ENCODE measurements at regions of chr10 and their contacts with region 1.

Region 1: GRCh38 chr10:57338823-57339558 is 928.7 kb downstream of the IPMK start:
- DNase-seq: peak; percentile 43
- H3K4me3 ChIP-seq: no peak overlapping the region
- CTCF ChIP-seq: peak; percentile 59

Region 2: DNA sequence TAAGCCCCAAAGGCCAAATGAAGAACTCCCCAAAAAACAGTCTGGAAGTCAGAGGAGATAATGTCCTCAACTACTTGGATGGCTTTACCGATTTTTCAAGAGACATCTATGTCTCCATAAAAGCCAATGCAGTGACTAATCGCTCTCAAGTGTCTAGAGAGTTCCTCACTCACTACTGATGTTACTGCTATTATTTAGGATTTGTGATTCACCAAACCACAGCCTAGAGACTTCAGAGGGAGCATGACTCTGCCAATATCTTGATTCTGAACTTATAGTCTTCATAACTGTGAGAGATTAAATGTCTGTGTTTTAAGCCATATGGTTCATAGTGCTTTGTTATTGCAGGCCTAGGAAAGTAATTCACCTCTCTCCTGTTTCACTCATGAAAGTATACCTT is 768.5 kb after region 1 on chr10:
- in situ Hi-C with region 1: loop called (anchors 25 kb)
- DNase-seq: peak; percentile 78
- H3K4me3 ChIP-seq: no peak overlapping the region
- CTCF ChIP-seq: no peak